Cardiac septum (tissue), 1 donor: ENCODE measurements at regions of chr10 and their contacts with region 1.

Region 1: DNA sequence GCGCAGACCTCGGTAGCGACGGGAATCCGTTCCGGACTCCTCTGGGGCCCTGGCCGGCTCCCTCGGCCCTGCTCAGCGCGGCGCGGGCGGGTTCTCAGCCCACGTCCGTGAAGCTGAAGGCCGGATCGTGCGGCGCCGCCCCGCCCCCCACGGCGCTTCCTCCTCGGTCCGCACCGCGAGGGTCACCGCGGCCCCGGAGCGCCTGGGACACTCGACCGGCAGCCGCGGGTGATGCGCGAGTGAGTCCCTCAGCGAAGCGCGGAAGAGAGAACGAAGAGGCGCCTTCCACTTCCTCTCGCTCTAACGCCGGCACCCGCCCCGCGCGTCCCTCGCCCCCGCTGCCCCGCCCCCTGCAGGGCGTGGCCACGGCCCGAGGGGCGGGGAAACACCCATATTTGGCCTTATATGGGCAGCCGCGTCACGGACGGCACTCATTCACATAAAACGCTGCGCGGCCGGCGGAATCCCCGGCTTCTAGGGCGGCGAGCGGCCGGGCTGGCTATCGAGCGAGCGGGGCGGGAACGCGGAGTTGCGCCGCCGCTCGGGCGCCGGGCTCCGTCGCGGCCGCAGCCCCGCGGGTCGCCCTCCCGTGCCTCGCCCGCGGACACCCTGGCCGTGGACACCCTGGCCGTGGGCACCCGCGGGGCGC is at the start of gene DUSP5:
- DNase-seq: peak; percentile 99
- total RNA-seq, gene DUSP5: 29.4 TPM

Region 2: DNA sequence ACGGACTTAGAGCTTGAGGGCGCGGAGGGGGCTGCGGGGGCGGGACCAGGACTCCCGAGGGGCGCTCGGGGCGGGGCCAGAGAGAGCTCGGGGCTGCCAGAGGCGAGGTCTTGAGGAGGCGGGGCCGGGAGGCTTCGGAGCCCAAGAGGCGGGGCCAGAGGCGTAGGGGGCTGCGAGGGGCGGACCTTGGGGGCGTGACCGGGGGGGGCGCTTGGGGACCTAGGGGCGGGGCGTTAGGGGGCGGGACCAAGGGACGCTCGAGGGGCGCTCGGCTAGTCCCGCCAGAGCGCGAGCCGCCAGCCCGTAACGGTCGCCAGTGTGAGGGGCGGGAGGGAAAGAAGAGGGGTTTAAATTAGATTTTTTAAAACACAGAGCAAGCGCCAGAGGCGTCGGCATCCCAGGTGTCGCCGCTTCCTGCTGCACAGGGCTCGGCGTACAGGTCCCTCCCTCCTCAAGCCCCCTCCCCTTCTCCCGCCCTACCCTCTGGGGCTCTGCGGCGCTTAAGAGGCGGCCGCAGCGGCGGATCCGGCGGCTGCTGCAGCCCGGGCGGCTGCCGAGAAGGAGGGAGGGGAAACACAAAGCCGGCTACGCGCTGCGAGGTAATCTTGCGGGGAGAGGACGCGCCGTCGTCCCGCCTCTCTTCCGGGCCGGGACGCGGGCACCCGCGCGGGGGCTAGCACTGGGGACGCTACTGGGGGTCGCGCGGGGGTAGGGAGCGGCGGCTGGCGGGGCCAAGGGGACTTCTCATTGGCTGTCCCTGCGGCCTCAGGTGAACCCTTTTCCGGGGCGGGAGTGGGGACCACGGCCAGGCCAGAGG is 489.7 kb before region 1 on chr10 and contains the start of gene ADD3:
- intact Hi-C with region 1: loop called (anchors 10 kb)
- DNase-seq: peak; percentile 97
- total RNA-seq, gene ADD3: 77.2 TPM

Region 3: GRCh38 chr10:110093722-110094121 is 403.8 kb before region 1 on chr10:
- intact Hi-C with region 1: no loop called
- DNase-seq: no peak

Region 4: DNA sequence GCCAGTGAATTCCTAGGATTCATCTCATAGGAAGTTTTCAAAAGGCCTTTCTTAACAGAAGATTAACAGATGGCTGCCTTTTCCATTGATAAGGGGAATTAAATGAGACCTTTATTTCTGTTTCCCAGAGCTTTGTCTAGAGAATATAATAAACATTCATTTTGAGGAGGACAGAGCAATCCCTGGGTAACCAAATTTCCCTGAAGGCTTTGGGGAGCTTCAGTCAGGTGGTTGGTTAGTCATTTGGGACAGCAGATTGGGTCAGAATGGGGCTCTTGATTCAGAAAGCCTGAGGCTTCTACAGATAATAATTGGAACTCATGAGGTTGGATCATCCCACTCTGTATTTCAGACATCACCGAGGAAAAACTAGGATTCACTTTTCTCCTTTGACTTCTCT is 268.4 kb before region 1 on chr10:
- intact Hi-C with region 1: no loop called
- DNase-seq: no peak

Region 5: DNA sequence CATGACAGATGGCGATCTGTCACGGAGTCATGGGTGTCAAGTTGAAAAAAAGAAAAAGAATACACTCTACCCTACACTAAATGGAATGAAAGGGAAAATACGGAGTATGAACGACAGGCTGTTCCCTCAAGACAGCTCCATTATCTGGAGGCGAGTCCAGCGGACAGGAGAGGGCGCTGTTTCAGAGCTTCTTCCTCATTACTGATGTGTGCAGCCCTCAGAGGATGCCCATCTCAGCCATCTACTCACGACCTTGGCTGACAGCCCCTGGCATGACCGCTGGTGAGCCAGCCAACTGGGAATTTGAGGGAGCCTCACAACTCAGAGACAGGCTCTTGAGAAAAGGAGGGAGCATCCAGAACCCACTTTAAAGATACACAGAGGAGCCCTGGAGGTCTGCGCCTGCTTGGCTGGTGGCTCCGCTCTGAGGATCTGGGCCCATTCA is 143.2 kb before region 1 on chr10:
- intact Hi-C with region 1: loop called (anchors 1 kb)
- DNase-seq: peak; percentile 86

Region 6: DNA sequence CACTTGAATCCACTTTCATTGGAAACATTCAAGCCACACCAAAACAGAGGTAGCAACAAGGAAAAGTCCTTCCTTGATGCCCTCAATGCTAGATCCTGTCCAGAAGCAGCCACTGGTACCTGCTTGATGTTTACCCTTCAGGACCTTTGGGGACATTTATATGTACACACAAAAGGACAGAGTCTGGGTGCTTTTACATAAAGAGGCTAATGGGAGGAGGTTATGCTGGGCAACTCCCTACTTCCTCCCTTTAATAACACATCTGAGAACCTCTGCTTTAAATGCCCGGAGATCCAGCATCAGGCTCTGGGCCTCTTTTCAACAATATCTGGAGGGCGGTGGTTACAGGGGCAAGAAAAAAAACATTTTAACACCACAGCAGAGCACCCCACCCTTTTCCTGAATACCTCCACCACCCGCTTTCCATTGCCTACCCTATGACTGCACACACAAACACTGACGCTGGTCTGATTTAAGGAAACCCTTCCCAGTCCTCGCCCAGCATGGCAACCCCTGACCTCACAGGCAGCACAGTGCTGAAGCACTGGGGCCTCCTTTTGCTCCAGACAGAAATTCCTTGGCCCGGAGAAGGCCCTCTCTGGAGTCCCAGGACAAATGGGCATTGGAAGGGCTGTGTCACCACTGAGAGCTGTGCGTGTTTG is 39.2 kb before region 1 on chr10:
- intact Hi-C with region 1: loop called (anchors 2 kb)
- DNase-seq: no peak

Region 7: GRCh38 chr10:110547139-110547761 is 49.7 kb after region 1 on chr10:
- intact Hi-C with region 1: loop called (anchors 5 kb)
- DNase-seq: no peak

Region 8: GRCh38 chr10:110783509-110784107 is 286.0 kb after region 1 on chr10:
- intact Hi-C with region 1: no loop called
- DNase-seq: no peak